Activated B cell treated with CpG ODN at 0.5 μM for 24 hours (primary cell): ENCODE measurements at regions of chr21 and their contacts with region 1.

Region 1: DNA sequence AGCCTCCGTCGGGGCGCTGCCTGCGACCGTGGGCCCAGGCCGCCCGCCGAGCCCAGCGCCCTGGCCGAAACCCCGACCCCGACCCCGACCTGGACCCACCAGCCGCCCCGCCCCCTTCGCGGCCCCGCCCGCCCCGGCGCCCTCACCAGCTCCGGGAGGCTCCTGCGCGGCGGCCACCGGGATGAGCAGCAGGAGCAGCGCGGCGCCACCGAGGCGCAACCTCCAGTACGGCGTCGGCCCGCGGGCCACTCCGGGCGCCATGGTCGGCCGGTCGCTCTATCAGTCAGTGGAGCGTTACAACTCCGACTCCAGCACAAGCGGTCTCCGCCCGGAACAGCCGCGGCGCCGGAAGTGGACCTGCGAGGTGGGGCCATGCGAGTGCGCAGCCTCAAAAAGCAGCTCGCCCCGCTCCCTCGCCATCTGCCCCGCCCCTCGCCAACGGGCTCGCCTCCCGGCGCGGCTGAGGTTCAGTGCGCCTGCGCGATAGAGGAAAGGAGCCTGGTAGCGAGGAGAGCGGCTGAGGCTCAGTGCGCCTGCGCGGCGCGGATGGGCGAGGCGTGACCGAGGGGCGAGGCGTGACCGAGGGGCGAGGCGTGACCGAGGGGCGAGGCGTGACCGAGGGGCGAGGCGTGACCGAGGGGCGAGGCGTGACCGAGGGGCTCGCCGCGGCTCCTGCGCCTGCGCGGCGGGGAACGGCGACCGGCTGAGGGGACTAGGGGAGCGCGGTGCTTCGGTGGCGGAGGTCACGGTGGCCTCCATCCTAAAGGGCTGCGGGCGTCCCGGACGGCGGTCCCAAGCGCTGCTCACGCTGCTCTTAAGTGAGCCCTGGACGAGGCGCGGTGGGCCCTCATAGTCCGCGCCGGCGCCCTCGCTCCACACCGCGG is at the start of gene PTTG1IP:
- DNase-seq: peak; percentile 98
- ATAC-seq: peak; percentile 81
- H3K4me3 Mint-ChIP-seq: peak within 1 kb of the TSS; percentile 92
- H3K27ac Mint-ChIP-seq: peak within 1 kb of the TSS; percentile 92
- H3K4me1 Mint-ChIP-seq: peaks cover 63% of the 10 kb centered on the region
- H3K27me3 Mint-ChIP-seq: no peaks in the 10 kb centered on the region
- CTCF ChIP-seq: no peak
- total RNA-seq, gene PTTG1IP: 35.3 and 36.6 TPM in 2 replicates

Region 2: GRCh38 chr21:44510508-44511210 is 362.9 kb before region 1 on chr21:
- CTCF ChIA-PET with region 1: no interaction called
- POLR2A ChIA-PET with region 1: no interaction called
- intact Hi-C with region 1: loop called (anchors 10 kb)
- DNase-seq: peak; percentile 66
- ATAC-seq: peak; percentile 72
- H3K4me3 Mint-ChIP-seq: no peak overlapping the region
- H3K27ac Mint-ChIP-seq: no peak overlapping the region
- H3K4me1 Mint-ChIP-seq: peaks cover 2% of the 10 kb centered on the region
- H3K27me3 Mint-ChIP-seq: peaks cover 10% of the 10 kb centered on the region
- CTCF ChIP-seq: no peak

Region 3: DNA sequence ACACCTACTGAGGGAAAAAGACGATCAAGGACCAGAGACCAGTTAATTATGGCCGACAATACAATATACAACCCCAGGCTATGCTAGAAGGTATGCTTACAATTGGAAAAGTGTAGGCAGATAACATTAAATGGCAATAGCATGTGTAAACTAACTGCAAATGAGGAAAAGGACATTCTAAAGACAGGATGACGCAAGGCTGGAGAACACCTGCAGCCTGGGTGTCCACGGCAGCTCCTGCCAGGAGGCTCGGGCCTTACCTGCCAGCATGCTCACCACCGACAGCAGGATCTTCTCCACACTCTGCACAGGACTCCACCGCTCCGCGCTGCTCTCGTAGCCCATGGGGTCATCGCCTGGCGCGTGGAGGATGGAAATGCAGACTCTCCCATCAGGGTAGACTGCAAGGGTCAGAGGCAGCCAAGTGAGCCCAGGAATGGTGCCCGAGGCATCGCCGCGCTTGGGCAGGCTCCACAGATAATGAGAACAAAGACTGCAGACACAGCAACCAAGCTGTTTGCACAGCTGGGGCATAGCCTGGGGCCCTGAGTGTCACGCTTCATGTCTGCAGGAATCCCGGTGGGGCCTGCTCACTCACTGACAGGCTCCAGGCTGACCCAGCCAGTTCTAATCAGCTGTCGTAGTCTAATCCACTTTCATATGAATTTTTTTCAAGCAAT is 100.2 kb before region 1 on chr21:
- CTCF ChIA-PET with region 1: no interaction called
- POLR2A ChIA-PET with region 1: no interaction called
- intact Hi-C with region 1: no loop called
- DNase-seq: no peak
- ATAC-seq: no peak
- H3K4me3 Mint-ChIP-seq: no peak overlapping the region
- H3K27ac Mint-ChIP-seq: no peak overlapping the region
- H3K4me1 Mint-ChIP-seq: no peaks in the 10 kb centered on the region
- H3K27me3 Mint-ChIP-seq: no peaks in the 10 kb centered on the region
- CTCF ChIP-seq: no peak

Region 4: GRCh38 chr21:44817506-44817880 is 56.1 kb before region 1 on chr21:
- CTCF ChIA-PET with region 1: no interaction called
- POLR2A ChIA-PET with region 1: interaction called, 17 read pairs
- intact Hi-C with region 1: loop called (anchors 1 kb)
- DNase-seq: peak; percentile 89
- ATAC-seq: peak; percentile 93
- H3K4me3 Mint-ChIP-seq: peak overlapping the region; percentile 53
- H3K27ac Mint-ChIP-seq: no peak overlapping the region
- H3K4me1 Mint-ChIP-seq: peaks cover 12% of the 10 kb centered on the region
- H3K27me3 Mint-ChIP-seq: no peaks in the 10 kb centered on the region
- CTCF ChIP-seq: no peak

Region 5: DNA sequence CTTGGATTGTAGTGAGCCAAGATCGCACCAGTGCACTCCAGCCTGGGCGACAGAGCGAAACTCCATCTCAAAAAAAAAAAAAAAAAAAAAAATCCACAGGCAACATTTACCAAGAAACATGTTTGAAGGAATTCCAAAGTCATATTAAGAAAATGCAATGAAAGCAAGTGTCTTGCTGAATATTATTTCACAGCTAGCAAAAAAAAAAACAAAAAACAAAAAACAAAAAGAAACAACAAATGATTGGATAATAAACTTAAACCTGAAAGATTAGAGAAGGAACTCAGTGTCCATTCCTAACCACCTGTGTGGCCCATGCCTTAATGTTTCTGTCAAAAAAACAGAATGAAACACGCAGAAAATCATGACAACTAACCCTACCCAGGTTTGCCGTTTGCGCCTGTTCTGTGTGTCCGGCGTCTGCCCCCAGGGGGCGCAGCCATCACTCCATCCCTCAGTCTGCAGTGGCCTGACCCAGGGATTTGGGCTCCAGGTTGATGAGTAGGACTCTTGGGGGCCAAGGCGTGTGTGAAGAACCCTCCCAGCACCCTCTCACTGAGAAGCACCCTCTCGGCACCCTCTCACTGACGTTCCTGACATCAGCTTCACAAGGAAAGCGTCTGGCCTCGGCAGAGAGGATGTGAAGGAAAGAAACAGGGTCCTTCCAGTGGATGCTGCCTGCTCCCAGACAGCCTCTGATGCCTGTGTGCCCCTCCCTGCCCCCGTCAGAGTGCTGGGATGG is 19.1 kb after region 1 on chr21:
- CTCF ChIA-PET with region 1: interaction called, 4 read pairs
- POLR2A ChIA-PET with region 1: interaction called, 4 read pairs
- intact Hi-C with region 1: loop called (anchors 2 kb)
- DNase-seq: peak; percentile 73
- ATAC-seq: peak; percentile 85
- H3K4me3 Mint-ChIP-seq: no peak overlapping the region
- H3K27ac Mint-ChIP-seq: no peak overlapping the region
- H3K4me1 Mint-ChIP-seq: peaks cover 24% of the 10 kb centered on the region
- H3K27me3 Mint-ChIP-seq: no peaks in the 10 kb centered on the region
- CTCF ChIP-seq: peak; percentile 98

Region 6: GRCh38 chr21:44911389-44912157 is 38.0 kb after region 1 on chr21:
- CTCF ChIA-PET with region 1: no interaction called
- POLR2A ChIA-PET with region 1: interaction called, 6 read pairs
- intact Hi-C with region 1: loop called (anchors 1 kb)
- DNase-seq: no peak
- ATAC-seq: peak; percentile 36
- H3K4me3 Mint-ChIP-seq: peak overlapping the region; percentile 58
- H3K27ac Mint-ChIP-seq: peak overlapping the region; percentile 57
- H3K4me1 Mint-ChIP-seq: peaks cover 88% of the 10 kb centered on the region
- H3K27me3 Mint-ChIP-seq: no peaks in the 10 kb centered on the region
- CTCF ChIP-seq: no peak

Region 7: GRCh38 chr21:45643021-45643980 is 769.7 kb after region 1 on chr21 and contains the start of gene PCBP3:
- CTCF ChIA-PET with region 1: no interaction called
- POLR2A ChIA-PET with region 1: no interaction called
- intact Hi-C with region 1: loop called (anchors 10 kb)
- DNase-seq: peak; percentile 75
- ATAC-seq: peak; percentile 79
- H3K4me3 Mint-ChIP-seq: peak within 1 kb of the TSS; percentile 67
- H3K27ac Mint-ChIP-seq: no peak within 1 kb of the TSS
- H3K4me1 Mint-ChIP-seq: peaks cover 40% of the 10 kb centered on the region
- H3K27me3 Mint-ChIP-seq: peaks cover 32% of the 10 kb centered on the region
- CTCF ChIP-seq: no peak
- total RNA-seq, gene PCBP3: not detected in 2 replicates